CD8-positive, alpha-beta T cell (primary cell): ENCODE measurements at regions of chr1 and their contacts with region 1.

Region 1: GRCh38 chr1:24586970-24587820 is 31.3 kb downstream of the NCMAP start:
- DNase-seq: peak in 8 of 9 experiments; percentile 10 to 88 (median 58)
- ATAC-seq: peak; percentile 99
- H3K4me3 ChIP-seq: no peak overlapping the region
- H3K4me3 Mint-ChIP-seq: peak overlapping the region; percentile 11
- H3K27ac ChIP-seq: peak overlapping the region; percentile 27 to 30
- H3K27ac Mint-ChIP-seq: peak overlapping the region; percentile 92
- H3K4me1 ChIP-seq: peaks cover 5% of the 10 kb centered on the region
- H3K4me1 Mint-ChIP-seq: peaks cover 6% of the 10 kb centered on the region
- H3K27me3 ChIP-seq: no peaks in the 10 kb centered on the region
- H3K27me3 Mint-ChIP-seq: no peaks in the 10 kb centered on the region
- CTCF ChIP-seq: peak; percentile 92

Region 2: GRCh38 chr1:24201941-24202440 is 385.2 kb before region 1 on chr1:
- CTCF ChIA-PET with region 1: interaction called, 63 read pairs
- POLR2A ChIA-PET with region 1: no interaction called
- intact Hi-C with region 1: loop called in 1 of 2 experiments (anchors 1 kb)
- DNase-seq: peak; percentile 26 to 72 (median 59)
- ATAC-seq: no peak
- H3K4me3 ChIP-seq: no peak overlapping the region
- H3K4me3 Mint-ChIP-seq: no peak overlapping the region
- H3K27ac ChIP-seq: no peak overlapping the region
- H3K27ac Mint-ChIP-seq: no peak overlapping the region
- H3K4me1 ChIP-seq: peaks cover 4% of the 10 kb centered on the region
- H3K4me1 Mint-ChIP-seq: peaks cover 8% of the 10 kb centered on the region
- H3K27me3 ChIP-seq: no peaks in the 10 kb centered on the region
- H3K27me3 Mint-ChIP-seq: peaks cover 2% of the 10 kb centered on the region
- CTCF ChIP-seq: peak; percentile 80

Region 3: DNA sequence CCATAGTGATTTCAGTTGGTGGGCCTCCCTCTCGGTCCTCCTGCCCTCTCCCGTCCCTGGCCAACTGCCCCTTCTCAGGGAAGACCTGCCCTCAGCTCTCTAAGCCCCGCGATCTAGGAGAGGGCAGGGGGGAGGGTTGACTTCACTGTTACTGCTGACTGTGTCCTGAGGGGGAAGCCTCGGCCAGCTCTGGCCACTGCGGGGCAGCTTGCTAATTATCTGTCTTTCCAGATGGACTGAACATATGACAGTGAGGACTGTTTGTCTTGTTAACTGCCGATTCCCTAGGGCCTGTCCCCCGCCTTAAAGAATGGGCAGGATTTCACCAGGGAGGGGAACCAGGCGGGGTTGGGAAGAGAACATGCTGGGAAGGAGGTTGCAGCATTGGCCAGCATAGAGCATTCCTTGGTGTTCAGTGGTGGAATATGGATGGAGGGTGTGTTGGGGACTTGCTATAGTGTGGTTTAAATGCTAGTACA is 148.7 kb before region 1 on chr1:
- CTCF ChIA-PET with region 1: interaction called, 7 read pairs
- POLR2A ChIA-PET with region 1: no interaction called
- intact Hi-C with region 1: loop called (anchors 5 kb)
- DNase-seq: no peak
- ATAC-seq: no peak
- H3K4me3 ChIP-seq: no peak overlapping the region
- H3K4me3 Mint-ChIP-seq: no peak overlapping the region
- H3K27ac ChIP-seq: no peak overlapping the region
- H3K27ac Mint-ChIP-seq: peak overlapping the region; percentile 72
- H3K4me1 ChIP-seq: peaks cover 4% of the 10 kb centered on the region
- H3K4me1 Mint-ChIP-seq: peaks cover 32% of the 10 kb centered on the region
- H3K27me3 ChIP-seq: no peaks in the 10 kb centered on the region
- H3K27me3 Mint-ChIP-seq: no peaks in the 10 kb centered on the region
- CTCF ChIP-seq: no peak

Region 4: GRCh38 chr1:24514946-24515345 is 72.2 kb before region 1 on chr1:
- CTCF ChIA-PET with region 1: interaction called, 11 read pairs
- POLR2A ChIA-PET with region 1: interaction called, 3 read pairs
- intact Hi-C with region 1: no loop called
- DNase-seq: no peak
- ATAC-seq: no peak
- H3K4me3 ChIP-seq: no peak overlapping the region
- H3K4me3 Mint-ChIP-seq: peak overlapping the region; percentile 12
- H3K27ac ChIP-seq: no peak overlapping the region
- H3K27ac Mint-ChIP-seq: peak overlapping the region; percentile 81
- H3K4me1 ChIP-seq: peaks cover 68% of the 10 kb centered on the region
- H3K4me1 Mint-ChIP-seq: peaks cover 71% of the 10 kb centered on the region
- H3K27me3 ChIP-seq: no peaks in the 10 kb centered on the region
- H3K27me3 Mint-ChIP-seq: no peaks in the 10 kb centered on the region
- CTCF ChIP-seq: no peak

Region 5: DNA sequence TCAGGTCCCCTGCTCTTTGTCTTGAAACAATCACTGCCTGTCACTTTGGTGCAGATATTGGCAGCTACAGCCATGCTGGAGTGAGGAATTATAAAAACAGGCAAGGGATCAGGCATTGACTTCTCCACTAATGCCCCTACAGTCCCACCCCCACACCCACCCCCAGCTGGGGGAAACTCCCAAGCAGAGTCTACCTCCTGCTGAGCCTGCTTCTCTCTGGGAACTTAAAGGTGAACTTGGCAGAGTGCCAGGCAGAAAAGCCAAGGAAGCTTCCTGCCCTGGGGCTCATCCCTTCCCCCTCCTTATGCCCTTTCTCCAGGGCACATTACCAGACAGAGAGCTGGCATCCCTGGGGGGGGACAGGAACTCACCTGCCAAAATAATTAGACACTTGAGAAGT is 24.6 kb before region 1 on chr1:
- CTCF ChIA-PET with region 1: interaction called, 13 read pairs
- POLR2A ChIA-PET with region 1: no interaction called
- intact Hi-C with region 1: no loop called
- DNase-seq: peak in 1 of 9 experiments; percentile 27
- ATAC-seq: no peak
- H3K4me3 ChIP-seq: no peak overlapping the region
- H3K4me3 Mint-ChIP-seq: no peak overlapping the region
- H3K27ac ChIP-seq: no peak overlapping the region
- H3K27ac Mint-ChIP-seq: no peak overlapping the region
- H3K4me1 ChIP-seq: no peaks in the 10 kb centered on the region
- H3K4me1 Mint-ChIP-seq: peaks cover 4% of the 10 kb centered on the region
- H3K27me3 ChIP-seq: peaks cover 0 to 3% of the 10 kb centered on the region in 2 experiments
- H3K27me3 Mint-ChIP-seq: peaks cover 9% of the 10 kb centered on the region
- CTCF ChIP-seq: no peak

Region 6: DNA sequence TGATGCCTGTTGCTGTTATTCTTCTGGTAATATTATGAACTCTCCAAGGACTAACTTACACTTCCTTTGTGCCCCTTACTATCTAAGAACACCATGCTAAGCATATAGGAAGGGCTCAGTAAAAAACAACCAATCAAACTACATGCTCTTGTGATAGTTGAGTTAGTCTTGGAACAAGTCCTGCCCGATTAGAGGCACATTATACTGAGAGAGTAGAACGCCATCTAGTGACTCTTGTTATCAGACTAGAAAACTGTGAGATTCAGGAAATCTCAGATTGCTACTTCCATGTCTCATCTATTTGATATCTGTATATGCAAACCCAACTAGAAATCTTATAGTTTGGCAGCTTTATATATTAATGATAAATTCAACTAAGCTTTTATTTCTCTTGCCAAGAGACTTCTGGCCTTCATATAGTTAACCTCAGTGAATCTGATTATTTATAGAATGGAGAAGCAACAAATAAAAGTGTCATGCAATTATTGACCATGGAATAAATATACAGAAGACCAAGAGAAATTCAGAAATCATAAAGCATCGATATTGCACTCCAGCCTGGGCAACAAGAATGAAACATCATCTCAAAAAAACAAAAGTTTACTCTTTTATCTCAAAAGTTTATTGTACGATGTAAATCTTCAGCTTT is 48.1 kb after region 1 on chr1:
- CTCF ChIA-PET with region 1: interaction called, 9 read pairs
- POLR2A ChIA-PET with region 1: no interaction called
- intact Hi-C with region 1: loop called (anchors 1 to 5 kb)
- DNase-seq: peak in 2 of 9 experiments; percentile 63 to 75
- ATAC-seq: peak; percentile 93
- H3K4me3 ChIP-seq: no peak overlapping the region
- H3K4me3 Mint-ChIP-seq: no peak overlapping the region
- H3K27ac ChIP-seq: no peak overlapping the region
- H3K27ac Mint-ChIP-seq: no peak overlapping the region
- H3K4me1 ChIP-seq: no peaks in the 10 kb centered on the region
- H3K4me1 Mint-ChIP-seq: peaks cover 2% of the 10 kb centered on the region
- H3K27me3 ChIP-seq: peaks cover 0 to 3% of the 10 kb centered on the region in 2 experiments
- H3K27me3 Mint-ChIP-seq: peaks cover 4% of the 10 kb centered on the region
- CTCF ChIP-seq: peak; percentile 57